ENCODE measurements at regions of chr12 and their contacts with region 1.

Region 1: DNA sequence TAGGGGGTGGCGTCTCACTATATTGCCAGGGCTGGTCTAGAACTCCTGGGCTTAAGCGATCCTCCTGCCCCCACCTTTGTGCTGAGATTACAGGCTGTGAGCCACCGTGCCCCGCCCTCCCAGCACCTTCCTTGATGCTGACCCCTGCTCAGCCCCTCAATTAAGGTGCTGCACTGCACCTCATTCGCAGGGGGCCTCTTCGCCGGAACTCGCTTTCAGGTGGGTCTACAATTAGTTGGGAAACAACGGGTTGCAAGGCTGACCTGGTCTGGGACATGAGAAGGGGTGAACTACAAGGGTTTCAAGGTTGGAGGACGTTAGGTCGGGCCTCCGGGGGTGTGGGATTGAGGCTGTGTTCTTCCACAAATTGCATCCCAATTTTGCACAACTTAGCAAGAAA is 1.2 kb upstream of the NOP2 start:
- DNase-seq: peak in 2 of 10 donors; percentile 52 to 82

Region 2: DNA sequence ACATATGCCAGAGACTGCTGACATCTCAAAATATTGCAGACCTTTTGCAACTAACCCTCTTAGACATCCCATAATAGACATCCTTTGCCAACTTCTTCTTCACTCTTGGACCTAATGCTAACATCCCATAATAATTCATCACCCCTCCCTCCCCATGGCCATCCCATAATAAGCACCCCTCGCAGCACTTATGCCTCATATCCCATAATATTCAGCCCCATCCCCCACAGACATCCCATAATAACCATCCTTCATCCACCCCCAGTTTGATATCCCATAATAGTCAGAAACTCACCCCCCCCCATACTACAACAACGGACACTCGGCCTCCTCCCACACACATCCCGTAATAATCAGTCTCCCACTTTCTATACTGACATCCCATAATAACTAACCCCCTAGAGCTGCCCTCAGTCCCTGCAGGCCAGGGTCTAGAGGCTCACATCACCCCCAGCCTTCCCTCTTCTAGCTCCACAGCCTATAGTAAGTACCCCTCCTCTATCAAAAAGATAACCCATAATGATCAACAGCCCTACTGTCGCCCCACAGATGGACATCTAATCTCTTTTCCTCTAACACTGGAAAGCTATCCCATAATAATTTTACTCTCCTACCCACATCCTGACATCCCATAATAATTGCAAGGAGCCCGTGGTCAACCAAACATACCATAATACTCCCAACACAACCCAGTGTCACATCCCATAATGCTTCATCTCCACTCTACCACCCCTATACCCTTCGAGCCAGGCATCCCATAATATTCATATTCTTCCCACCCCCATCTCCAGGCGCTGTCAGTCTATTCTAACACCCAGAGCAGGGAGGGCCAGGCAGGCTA is 38.7 kb after region 1 on chr12:
- intact Hi-C with region 1: loop called (anchors 2 kb)
- DNase-seq: peak in 5 of 10 donors; percentile 21 to 73 (median 42)

Measured in posterior cingulate gyrus (tissue), 11 donors.